GM12878 (cell line): ENCODE measurements at regions of chr5 and their contacts with region 1.

Region 1: DNA sequence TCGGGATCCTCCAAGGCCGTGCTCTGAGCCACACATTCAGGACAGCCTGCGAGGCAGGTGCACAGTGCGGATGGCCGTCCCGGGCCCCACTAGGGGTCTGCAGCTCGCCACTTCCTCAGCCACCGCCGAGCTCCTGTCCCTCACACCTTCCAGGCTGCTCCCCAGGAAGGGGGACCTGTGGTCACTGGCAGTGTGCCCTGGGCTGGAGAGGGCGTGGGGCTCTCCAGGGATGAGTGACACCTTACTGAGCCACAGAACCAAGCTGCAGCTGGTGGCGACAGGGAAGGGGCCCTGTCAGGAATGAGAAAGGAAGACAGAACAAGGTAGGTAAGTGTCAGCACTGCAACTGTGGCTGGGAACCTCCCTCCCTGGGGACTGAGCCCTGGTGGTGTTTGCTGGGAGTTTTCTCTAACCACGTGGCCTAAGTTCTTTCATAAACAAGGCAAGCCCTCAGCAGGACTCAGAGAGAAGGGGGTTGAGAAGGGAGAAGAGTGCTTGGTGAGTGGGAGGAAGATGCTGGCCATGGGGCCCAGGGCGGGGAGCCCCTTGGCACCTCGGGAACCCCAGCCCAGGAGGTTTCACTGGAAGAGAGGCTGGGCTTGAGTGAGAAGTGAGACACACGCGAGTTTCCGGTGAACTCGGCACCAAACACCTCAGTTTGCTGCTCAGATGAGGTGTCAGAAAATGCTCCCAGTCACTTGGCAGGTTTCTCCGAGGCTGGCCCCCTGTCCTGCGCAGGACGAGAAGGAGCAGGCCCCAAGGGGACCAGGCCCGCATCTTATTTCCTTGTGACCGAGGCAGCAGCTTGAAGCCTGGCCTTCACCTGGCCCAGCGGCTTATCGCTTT is 5.2 kb downstream of the IL13 start:
- DNase-seq: peak; percentile 99
- ATAC-seq: peak; percentile 72
- H3K4me3 ChIP-seq: no peak overlapping the region
- H3K27ac ChIP-seq: peak overlapping the region; percentile 96
- H3K4me1 ChIP-seq: peaks cover 61% of the 10 kb centered on the region
- H3K27me3 ChIP-seq: no peaks in the 10 kb centered on the region
- CTCF ChIP-seq: 0 out of 6 replicates have a peak, but pooled peaks of 2 of the 3 experiments have one; percentile 1 to 2
- EP300 ChIP-seq: peak; percentile 85 to 90; a peak in 3 of 4 replicates
- POLR2A ChIP-seq: peak; percentile 65; the same call in 1 of the 2 replicates
- RAD21 ChIP-seq: peak; percentile 18; the same call in 1 of the 2 replicates

Region 2: DNA sequence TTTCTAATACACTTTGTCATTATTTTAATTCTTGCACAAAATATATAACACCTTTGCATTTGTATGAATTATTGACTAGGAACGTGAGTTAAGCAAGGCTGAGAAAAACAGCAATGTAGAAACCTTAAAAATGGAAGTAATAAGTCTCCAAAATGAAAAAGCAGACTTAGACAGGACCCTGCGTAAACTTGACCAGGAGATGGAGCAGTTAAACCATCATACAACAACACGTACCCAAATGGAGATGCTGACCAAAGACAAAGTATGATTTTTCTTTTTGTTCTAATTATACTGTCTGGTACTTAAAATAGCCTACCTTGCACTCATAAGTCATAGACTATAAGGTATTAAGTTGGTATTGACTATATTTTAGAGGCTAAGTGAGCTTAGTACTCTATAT is 72.0 kb before region 1 on chr5:
- CTCF ChIA-PET with region 1: interaction called, 4 read pairs
- POLR2A ChIA-PET with region 1: no interaction called
- RAD21 ChIA-PET with region 1: interaction called, 14 read pairs
- SMC1A ChIA-PET with region 1: interaction called, 4 read pairs
- in situ Hi-C with region 1: no loop called
- intact Hi-C with region 1: no loop called
- DNase-seq: no peak
- ATAC-seq: peak; percentile 54; the same call in 2 of the 3 replicates
- H3K4me3 ChIP-seq: no peak overlapping the region
- H3K27ac ChIP-seq: no peak overlapping the region
- H3K4me1 ChIP-seq: no peaks in the 10 kb centered on the region
- H3K27me3 ChIP-seq: no peaks in the 10 kb centered on the region
- CTCF ChIP-seq: peak in 2 of 3 experiments; percentile 31 to 59; a peak in 3 of 6 replicates
- EP300 ChIP-seq: no peak
- POLR2A ChIP-seq: no peak
- RAD21 ChIP-seq: peak; percentile 69

Region 3: GRCh38 chr5:132688536-132689339 is 25.6 kb after region 1 on chr5:
- CTCF ChIA-PET with region 1: interaction called, 10 read pairs
- POLR2A ChIA-PET with region 1: interaction called, 25 read pairs
- RAD21 ChIA-PET with region 1: interaction called, 95 read pairs
- SMC1A ChIA-PET with region 1: interaction called, 39 read pairs
- in situ Hi-C with region 1: no loop called
- intact Hi-C with region 1: loop called (anchors 1 kb)
- DNase-seq: no peak
- ATAC-seq: peak; percentile 34
- H3K4me3 ChIP-seq: no peak overlapping the region
- H3K27ac ChIP-seq: no peak overlapping the region
- H3K4me1 ChIP-seq: peaks cover 18% of the 10 kb centered on the region; the same call in 1 of the 2 replicates
- H3K27me3 ChIP-seq: no peaks in the 10 kb centered on the region
- CTCF ChIP-seq: no peak
- EP300 ChIP-seq: no peak
- POLR2A ChIP-seq: no peak
- RAD21 ChIP-seq: no peak

Region 4: DNA sequence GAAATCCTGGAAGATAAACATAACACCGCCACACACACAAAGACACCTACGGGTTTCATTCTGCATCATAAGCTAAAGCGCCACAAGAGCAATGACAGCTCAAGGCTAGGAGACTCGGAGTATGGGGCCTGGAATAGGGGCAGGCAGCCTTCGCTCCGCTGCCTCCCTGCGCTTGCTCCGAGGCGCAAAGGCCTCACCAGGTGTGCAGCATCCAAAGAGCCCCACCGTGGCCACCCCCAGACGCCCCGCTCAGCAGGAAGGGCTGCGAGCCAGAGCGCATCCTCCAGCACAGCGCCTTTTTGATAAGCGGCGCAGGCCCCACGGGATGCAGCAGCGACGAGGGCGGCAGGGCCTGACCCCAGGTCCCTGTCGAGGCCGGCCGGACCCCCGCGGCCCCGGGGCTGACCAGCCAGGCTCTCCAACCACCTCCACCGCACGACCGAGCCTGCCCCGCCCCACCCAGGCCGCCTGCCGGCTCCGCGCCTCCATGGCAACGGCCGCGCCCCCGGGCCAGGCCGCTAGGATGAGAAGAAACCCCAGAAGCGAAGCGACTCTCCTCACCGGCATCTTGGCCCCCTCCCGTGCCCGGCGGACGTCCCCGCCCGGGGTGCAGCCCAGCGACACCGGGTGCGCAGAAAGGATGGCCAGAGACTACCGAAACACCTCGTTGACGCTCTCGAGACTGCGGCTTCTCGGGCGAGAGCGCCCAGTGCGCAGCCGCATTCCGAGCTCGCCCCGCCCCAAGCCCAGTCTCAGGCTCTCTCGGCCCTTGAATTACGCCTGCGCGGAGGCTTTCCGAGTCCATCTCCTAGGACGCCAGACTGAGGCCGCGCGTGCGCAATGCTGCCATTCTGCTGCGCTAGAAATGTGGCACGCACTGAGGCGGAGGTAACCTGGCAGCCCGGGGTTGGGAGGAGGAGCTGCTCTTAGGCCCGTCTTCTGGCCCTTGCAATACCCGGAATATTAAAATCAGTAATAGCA is 74.0 kb after region 1 on chr5 and contains the start of gene KIF3A:
- CTCF ChIA-PET with region 1: interaction called, 10 read pairs
- POLR2A ChIA-PET with region 1: interaction called, 19 read pairs
- RAD21 ChIA-PET with region 1: interaction called, 34 read pairs
- SMC1A ChIA-PET with region 1: interaction called, 14 read pairs
- in situ Hi-C with region 1: no loop called
- intact Hi-C with region 1: loop called (anchors 2 kb)
- DNase-seq: peak; percentile 94
- ATAC-seq: peak; percentile 91
- H3K4me3 ChIP-seq: peak within 1 kb of the TSS; percentile 80
- H3K27ac ChIP-seq: peak within 1 kb of the TSS; percentile 52
- H3K4me1 ChIP-seq: no peaks in the 10 kb centered on the region
- H3K27me3 ChIP-seq: no peaks in the 10 kb centered on the region
- CTCF ChIP-seq: no peak
- EP300 ChIP-seq: no peak
- POLR2A ChIP-seq: peak; percentile 89
- RAD21 ChIP-seq: no peak
- polyA plus RNA-seq, gene KIF3A: 2.7 to 3.0 TPM

Region 5: GRCh38 chr5:132797651-132798050 is 134.5 kb after region 1 on chr5:
- CTCF ChIA-PET with region 1: interaction called, 13 read pairs
- POLR2A ChIA-PET with region 1: interaction called, 4 read pairs
- RAD21 ChIA-PET with region 1: interaction called, 5 read pairs
- SMC1A ChIA-PET with region 1: interaction called, 12 read pairs
- in situ Hi-C with region 1: no loop called
- intact Hi-C with region 1: no loop called
- DNase-seq: no peak
- ATAC-seq: no peak
- H3K4me3 ChIP-seq: no peak overlapping the region
- H3K27ac ChIP-seq: no peak overlapping the region
- H3K4me1 ChIP-seq: no peaks in the 10 kb centered on the region
- H3K27me3 ChIP-seq: no peaks in the 10 kb centered on the region
- CTCF ChIP-seq: no peak
- EP300 ChIP-seq: no peak
- POLR2A ChIP-seq: no peak
- RAD21 ChIP-seq: no peak